ENCODE measurements at regions of chr10 and their contacts with region 1.

Region 1: GRCh38 chr10:131900350-131901146 is at the start of gene PPP2R2D:
- DNase-seq: peak; percentile 91 to 97 (median 95)
- ATAC-seq: peak; percentile 83
- H3K4me3 ChIP-seq: peak within 1 kb of the TSS; percentile 65 to 76
- H3K4me3 Mint-ChIP-seq: peak within 1 kb of the TSS; percentile 87
- H3K27ac ChIP-seq: peak within 1 kb of the TSS; percentile 73 to 79
- H3K27ac Mint-ChIP-seq: peak within 1 kb of the TSS; percentile 88
- H3K4me1 ChIP-seq: peaks cover 56% of the 10 kb centered on the region
- H3K4me1 Mint-ChIP-seq: peaks cover 52% of the 10 kb centered on the region
- H3K27me3 ChIP-seq: no peaks in the 10 kb centered on the region
- H3K27me3 Mint-ChIP-seq: no peaks in the 10 kb centered on the region
- CTCF ChIP-seq: no peak
- total RNA-seq, gene PPP2R2D: 28.4 to 28.5 TPM

Region 2: GRCh38 chr10:131885391-131886161 is 15.0 kb before region 1 on chr10:
- CTCF ChIA-PET with region 1: interaction called, 16 read pairs
- POLR2A ChIA-PET with region 1: interaction called, 5 read pairs
- intact Hi-C with region 1: loop called in 1 of 2 experiments (anchors 1 kb)
- DNase-seq: peak; percentile 74 to 92 (median 82)
- ATAC-seq: peak; percentile 100
- H3K4me3 ChIP-seq: no peak overlapping the region
- H3K4me3 Mint-ChIP-seq: no peak overlapping the region
- H3K27ac ChIP-seq: no peak overlapping the region
- H3K27ac Mint-ChIP-seq: no peak overlapping the region
- H3K4me1 ChIP-seq: peaks cover 6% of the 10 kb centered on the region
- H3K4me1 Mint-ChIP-seq: peaks cover 4% of the 10 kb centered on the region
- H3K27me3 ChIP-seq: peaks cover 0 to 4% of the 10 kb centered on the region in 2 experiments
- H3K27me3 Mint-ChIP-seq: peaks cover 18% of the 10 kb centered on the region
- CTCF ChIP-seq: peak; percentile 91

Region 3: DNA sequence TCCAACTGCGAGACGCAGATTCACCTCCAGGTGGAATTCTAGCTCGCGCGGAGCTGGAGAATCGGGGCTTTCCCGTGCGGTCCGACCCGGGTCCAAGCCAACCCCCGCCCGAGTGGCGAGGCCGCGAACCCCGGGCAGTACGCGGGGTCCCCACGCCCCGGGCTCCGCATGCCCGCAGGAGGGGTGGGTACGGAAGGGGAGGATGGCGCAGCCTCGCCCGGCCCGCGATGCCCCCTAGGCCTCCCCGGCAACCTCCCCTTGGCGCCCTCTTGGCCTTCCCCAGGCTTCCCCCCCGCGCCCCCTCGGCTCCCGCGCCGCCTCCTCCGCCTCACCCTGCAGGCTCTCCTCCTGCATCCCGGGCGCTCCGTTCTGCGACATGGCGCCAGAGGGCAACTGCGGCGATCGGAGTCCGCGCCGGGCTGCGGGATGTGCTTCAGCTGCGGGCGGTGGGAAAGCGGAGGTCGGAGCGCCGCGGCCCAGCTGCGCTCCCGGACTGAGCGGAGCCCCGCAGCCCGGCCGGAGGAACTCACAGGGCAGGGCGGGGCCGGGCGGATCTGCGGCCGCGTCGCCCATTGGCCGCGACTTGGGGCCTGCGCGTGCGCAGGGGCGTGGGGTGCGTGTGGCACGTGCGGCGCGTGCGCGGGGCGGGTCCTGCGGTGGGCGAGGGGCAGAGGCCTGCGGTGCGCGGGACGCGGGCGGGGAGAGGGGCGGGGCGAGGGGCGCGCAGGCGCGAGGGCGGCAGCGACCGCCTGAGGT is 81.1 kb after region 1 on chr10 and contains the start of gene BNIP3:
- CTCF ChIA-PET with region 1: no interaction called
- POLR2A ChIA-PET with region 1: interaction called, 11 read pairs
- intact Hi-C with region 1: loop called (anchors 1 kb)
- DNase-seq: peak; percentile 84 to 98 (median 94)
- ATAC-seq: peak; percentile 90
- H3K4me3 ChIP-seq: peak within 1 kb of the TSS; percentile 66 to 83
- H3K4me3 Mint-ChIP-seq: peak within 1 kb of the TSS; percentile 84
- H3K27ac ChIP-seq: peak within 1 kb of the TSS; percentile 43 to 48
- H3K27ac Mint-ChIP-seq: peak within 1 kb of the TSS; percentile 81
- H3K4me1 ChIP-seq: peaks cover 47% of the 10 kb centered on the region
- H3K4me1 Mint-ChIP-seq: peaks cover 40% of the 10 kb centered on the region
- H3K27me3 ChIP-seq: no peaks in the 10 kb centered on the region
- H3K27me3 Mint-ChIP-seq: no peaks in the 10 kb centered on the region
- CTCF ChIP-seq: no peak
- total RNA-seq, gene BNIP3: 19.2 to 21.3 TPM

Region 4: DNA sequence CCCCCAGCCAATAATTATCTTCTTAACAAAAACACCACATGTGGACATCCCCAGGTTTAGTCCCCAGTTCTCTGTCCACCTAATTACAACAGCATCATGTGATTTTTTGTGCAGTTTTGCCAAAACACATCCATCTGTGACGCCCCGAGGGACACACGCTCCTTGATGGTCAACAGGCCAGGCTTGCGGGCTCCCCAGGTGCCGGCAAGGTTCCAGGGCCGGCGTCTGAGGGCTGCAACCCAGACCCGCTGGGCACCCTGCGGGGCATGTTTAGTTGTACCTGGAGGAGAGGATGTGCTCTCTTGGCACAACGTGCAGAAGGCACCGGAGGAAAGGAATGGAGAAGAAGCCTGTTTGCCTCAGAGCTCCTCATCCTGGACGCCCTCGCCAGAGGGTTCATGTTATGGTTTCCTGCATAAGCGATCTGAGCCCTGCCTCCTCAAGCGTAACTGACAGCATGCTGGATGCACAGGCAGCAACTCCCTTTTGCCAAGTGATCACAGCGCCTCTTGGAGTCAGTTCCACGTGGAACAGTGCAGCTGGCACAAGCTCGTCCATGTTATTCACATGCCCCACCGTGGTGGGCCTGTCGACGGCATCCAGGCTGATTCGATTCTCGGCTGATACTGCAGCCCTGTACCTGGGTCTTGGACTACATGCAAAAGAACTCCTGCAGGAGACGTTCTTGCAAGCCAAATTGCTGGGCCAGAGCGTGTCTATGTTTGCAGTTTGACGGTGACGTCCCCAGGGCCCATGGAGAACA is 206.8 kb after region 1 on chr10:
- CTCF ChIA-PET with region 1: no interaction called
- POLR2A ChIA-PET with region 1: no interaction called
- intact Hi-C with region 1: no loop called
- DNase-seq: peak in 1 of 9 experiments; percentile 42
- ATAC-seq: no peak
- H3K4me3 ChIP-seq: no peak overlapping the region
- H3K4me3 Mint-ChIP-seq: no peak overlapping the region
- H3K27ac ChIP-seq: no peak overlapping the region
- H3K27ac Mint-ChIP-seq: no peak overlapping the region
- H3K4me1 ChIP-seq: no peaks in the 10 kb centered on the region
- H3K4me1 Mint-ChIP-seq: no peaks in the 10 kb centered on the region
- H3K27me3 ChIP-seq: no peaks in the 10 kb centered on the region
- H3K27me3 Mint-ChIP-seq: no peaks in the 10 kb centered on the region
- CTCF ChIP-seq: no peak

Region 5: DNA sequence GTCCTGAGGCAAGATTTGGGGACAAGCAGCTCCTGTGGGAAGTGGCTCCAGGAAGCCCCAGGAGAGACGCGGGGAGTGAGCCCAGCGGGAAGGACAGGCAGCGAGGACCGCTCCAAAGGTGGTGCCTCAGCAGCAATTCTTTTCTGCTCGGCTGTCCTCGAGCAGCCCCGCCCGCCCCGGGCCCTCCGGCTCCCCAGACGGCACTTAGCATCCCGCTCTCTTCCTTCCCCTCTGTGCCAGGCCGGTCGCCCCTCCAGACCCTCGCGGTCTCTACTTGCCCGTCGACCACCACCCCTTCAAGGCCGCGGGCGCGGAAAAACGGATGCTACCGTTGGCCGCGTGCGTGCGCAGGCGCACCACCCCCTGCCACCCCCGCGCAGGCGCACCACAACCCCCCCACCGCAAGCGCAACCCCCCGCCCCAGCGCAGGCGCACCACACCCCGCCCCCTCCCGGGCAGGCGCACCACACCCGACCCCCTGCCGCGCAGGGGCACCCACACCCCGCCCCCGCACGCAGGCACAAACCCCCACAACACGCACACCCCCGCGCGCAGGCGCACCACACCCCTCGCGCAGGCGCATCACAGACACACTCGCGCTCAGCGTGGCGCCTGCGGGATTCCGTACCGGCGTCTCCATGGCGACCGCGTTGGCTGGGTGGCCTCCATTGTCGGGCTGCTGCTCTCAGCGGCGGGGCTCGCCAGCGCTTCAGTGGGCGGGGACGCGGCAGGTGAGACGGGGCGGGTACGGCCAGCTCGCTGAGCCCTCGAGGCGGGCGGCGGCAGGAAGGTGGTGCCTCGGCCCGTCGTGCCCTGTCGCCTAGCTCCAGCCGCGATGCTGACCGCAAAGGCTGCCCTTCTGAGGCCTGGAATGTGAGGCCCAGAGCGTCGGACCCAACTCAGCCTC is 431.2 kb after region 1 on chr10 and contains the start of gene LRRC27:
- CTCF ChIA-PET with region 1: no interaction called
- POLR2A ChIA-PET with region 1: no interaction called
- intact Hi-C with region 1: loop called in 1 of 2 experiments (anchors 2 kb)
- DNase-seq: peak; percentile 99 to 100 (median 100)
- ATAC-seq: peak; percentile 90
- H3K4me3 ChIP-seq: peak within 1 kb of the TSS; percentile 77 to 90
- H3K4me3 Mint-ChIP-seq: peak within 1 kb of the TSS; percentile 84
- H3K27ac ChIP-seq: peak within 1 kb of the TSS; percentile 68 to 83
- H3K27ac Mint-ChIP-seq: peak within 1 kb of the TSS; percentile 91
- H3K4me1 ChIP-seq: peaks cover 31% of the 10 kb centered on the region
- H3K4me1 Mint-ChIP-seq: peaks cover 58% of the 10 kb centered on the region
- H3K27me3 ChIP-seq: no peaks in the 10 kb centered on the region
- H3K27me3 Mint-ChIP-seq: no peaks in the 10 kb centered on the region
- CTCF ChIP-seq: no peak
- total RNA-seq, gene LRRC27: 0.68 to 3.2 TPM

Region 6: DNA sequence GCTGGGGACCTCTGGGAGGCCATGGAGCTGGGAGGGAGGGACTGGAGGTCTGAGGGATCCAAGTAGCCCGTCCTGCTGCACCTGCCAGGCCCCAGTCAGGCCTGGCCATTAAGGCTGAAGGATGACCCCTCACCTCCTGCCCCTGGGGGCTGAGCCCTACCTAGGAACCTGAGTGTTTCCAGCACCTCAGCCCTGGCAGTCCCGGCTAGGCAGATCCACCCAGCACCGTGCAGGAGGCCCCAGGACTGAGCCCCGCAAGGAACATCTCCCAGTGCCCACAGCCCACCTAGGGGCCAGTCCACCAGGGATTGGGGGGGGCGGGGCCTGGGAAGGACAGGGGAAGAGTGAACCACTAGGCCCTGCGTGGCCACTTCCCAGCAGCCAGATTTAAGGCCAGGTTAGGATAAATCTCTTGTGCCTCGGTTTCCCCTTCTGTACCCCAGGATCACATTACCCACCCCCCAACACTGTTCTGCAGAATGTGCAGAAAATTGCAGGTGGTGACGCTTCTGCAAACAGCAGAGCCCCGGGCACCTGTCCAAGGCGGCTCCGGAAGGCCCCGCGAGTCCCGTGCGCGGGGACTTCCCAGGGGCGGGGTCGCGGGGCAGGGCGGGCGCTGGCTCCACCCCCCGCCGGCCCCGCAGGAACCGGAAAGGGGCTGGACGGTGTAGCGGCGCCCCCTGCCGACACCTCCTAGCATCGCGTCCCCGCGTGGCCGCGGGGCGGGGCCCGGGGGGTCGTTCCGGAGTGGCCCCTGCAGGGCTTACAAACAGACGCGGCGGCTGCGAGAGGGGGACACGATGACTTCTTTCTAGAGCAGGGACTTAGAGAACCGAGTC is 552.3 kb after region 1 on chr10:
- CTCF ChIA-PET with region 1: no interaction called
- POLR2A ChIA-PET with region 1: no interaction called
- intact Hi-C with region 1: loop called (anchors 5 kb)
- DNase-seq: peak; percentile 86 to 96 (median 94)
- ATAC-seq: peak; percentile 92
- H3K4me3 ChIP-seq: peak overlapping the region in 1 of 2 experiments; percentile 20
- H3K4me3 Mint-ChIP-seq: peak overlapping the region; percentile 42
- H3K27ac ChIP-seq: peak overlapping the region; percentile 65 to 79
- H3K27ac Mint-ChIP-seq: peak overlapping the region; percentile 89
- H3K4me1 ChIP-seq: peaks cover 35% of the 10 kb centered on the region
- H3K4me1 Mint-ChIP-seq: peaks cover 29% of the 10 kb centered on the region
- H3K27me3 ChIP-seq: no peaks in the 10 kb centered on the region
- H3K27me3 Mint-ChIP-seq: no peaks in the 10 kb centered on the region
- CTCF ChIP-seq: peak; percentile 88